GM12878 (cell line): ENCODE measurements at regions of chr3 and their contacts with region 1.

Region 1: DNA sequence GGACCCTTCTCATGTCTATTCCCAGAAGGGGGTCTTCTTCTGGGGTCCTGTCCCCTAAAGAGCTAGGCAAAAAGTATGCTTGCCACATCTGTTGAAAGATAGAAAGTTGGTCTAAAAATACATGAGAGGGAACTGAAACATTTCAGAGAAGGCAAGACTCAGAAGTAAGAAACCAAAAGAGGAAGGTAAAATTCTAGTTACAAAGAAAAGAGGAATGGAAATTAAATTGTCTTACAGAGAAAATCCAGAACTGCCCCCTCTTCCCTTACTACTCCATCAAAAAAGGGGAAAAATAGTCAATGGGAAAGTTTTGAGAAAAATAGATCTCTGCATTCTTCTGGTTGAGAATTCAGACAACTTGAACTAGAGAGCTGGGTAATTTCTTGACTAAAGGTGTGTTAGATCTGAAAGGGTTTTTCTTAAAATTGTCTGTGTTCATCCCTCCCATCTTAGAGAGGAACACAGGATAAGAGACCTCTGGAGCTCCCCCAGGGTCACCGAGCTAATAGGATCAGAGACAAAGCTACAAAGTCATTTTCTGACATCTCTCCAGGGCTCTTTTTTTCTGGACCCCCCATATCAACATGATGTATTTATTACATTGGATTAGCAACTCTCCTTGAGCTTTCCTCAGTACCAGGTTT is 32.3 kb upstream of the CCR2 start:
- DNase-seq: no peak
- ATAC-seq: peak; percentile 85
- H3K4me3 ChIP-seq: peak overlapping the region; percentile 64; the same call in 1 of the 2 replicates
- H3K27ac ChIP-seq: peak overlapping the region; percentile 59
- H3K4me1 ChIP-seq: peaks cover 17% of the 10 kb centered on the region
- H3K27me3 ChIP-seq: no peaks in the 10 kb centered on the region
- CTCF ChIP-seq: no peak
- EP300 ChIP-seq: peak in 1 of 2 experiments; percentile 69; a peak in 2 of 4 replicates
- POLR2A ChIP-seq: no peak
- RAD21 ChIP-seq: no peak

Region 2: GRCh38 chr3:46297658-46298463 is 23.7 kb before region 1 on chr3:
- CTCF ChIA-PET with region 1: no interaction called
- POLR2A ChIA-PET with region 1: no interaction called
- RAD21 ChIA-PET with region 1: interaction called, 15 read pairs
- SMC1A ChIA-PET with region 1: interaction called, 22 read pairs
- in situ Hi-C with region 1: no loop called
- intact Hi-C with region 1: no loop called
- DNase-seq: no peak
- ATAC-seq: peak; percentile 20
- H3K4me3 ChIP-seq: no peak overlapping the region
- H3K27ac ChIP-seq: peak overlapping the region; percentile 47; the same call in 1 of the 2 replicates
- H3K4me1 ChIP-seq: peaks cover 68% of the 10 kb centered on the region
- H3K27me3 ChIP-seq: no peaks in the 10 kb centered on the region
- CTCF ChIP-seq: no peak
- EP300 ChIP-seq: no peak
- POLR2A ChIP-seq: no peak
- RAD21 ChIP-seq: no peak

Region 3: GRCh38 chr3:46334741-46335478 is 13.3 kb after region 1 on chr3:
- CTCF ChIA-PET with region 1: interaction called, 11 read pairs
- POLR2A ChIA-PET with region 1: interaction called, 4 read pairs
- RAD21 ChIA-PET with region 1: no interaction called
- SMC1A ChIA-PET with region 1: interaction called, 4 read pairs
- in situ Hi-C with region 1: no loop called
- intact Hi-C with region 1: no loop called
- DNase-seq: no peak
- ATAC-seq: no peak
- H3K4me3 ChIP-seq: no peak overlapping the region
- H3K27ac ChIP-seq: no peak overlapping the region
- H3K4me1 ChIP-seq: no peaks in the 10 kb centered on the region
- H3K27me3 ChIP-seq: no peaks in the 10 kb centered on the region
- CTCF ChIP-seq: no peak
- EP300 ChIP-seq: no peak
- POLR2A ChIP-seq: no peak
- RAD21 ChIP-seq: no peak

Region 4: GRCh38 chr3:46349485-46350261 is 28.1 kb after region 1 on chr3:
- CTCF ChIA-PET with region 1: interaction called, 3 read pairs
- POLR2A ChIA-PET with region 1: interaction called, 3 read pairs
- RAD21 ChIA-PET with region 1: no interaction called
- SMC1A ChIA-PET with region 1: interaction called, 9 read pairs
- in situ Hi-C with region 1: no loop called
- intact Hi-C with region 1: loop called (anchors 5 kb)
- DNase-seq: no peak
- ATAC-seq: peak; percentile 92
- H3K4me3 ChIP-seq: peak overlapping the region; percentile 42
- H3K27ac ChIP-seq: peak overlapping the region; percentile 59
- H3K4me1 ChIP-seq: peaks cover 31% of the 10 kb centered on the region
- H3K27me3 ChIP-seq: no peaks in the 10 kb centered on the region; a peak in 1 of 4 replicates
- CTCF ChIP-seq: no peak
- EP300 ChIP-seq: no peak
- POLR2A ChIP-seq: no peak
- RAD21 ChIP-seq: no peak

Region 5: DNA sequence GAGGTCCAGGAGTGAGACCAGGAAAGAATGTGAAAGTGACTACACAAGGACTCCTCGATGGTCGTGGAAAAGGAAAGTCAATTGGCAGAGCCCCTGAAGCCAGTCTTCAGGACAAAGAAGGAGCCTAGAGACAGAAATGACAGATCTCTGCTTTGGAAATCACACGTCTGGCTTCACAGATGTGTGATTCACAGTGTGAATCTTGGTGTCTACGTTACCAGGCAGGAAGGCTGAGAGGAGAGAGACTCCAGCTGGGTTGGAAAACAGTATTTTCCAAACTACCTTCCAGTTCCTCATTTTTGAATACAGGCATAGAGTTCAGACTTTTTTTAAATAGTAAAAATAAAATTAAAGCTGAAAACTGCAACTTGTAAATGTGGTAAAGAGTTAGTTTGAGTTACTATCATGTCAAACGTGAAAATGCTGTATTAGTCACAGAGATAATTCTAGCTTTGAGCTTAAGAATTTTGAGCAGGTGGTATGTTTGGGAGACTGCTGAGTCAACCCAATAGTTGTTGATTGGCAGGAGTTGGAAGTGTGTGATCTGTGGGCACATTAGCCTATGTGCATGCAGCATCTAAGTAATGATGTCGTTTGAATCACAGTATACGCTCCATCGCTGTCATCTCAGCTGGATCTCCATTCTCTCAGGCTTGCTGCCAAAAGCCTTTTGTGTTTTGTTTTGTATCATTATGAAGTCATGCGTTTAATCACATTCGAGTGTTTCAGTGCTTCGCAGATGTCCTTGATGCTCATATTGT is 38.3 kb after region 1 on chr3:
- CTCF ChIA-PET with region 1: interaction called, 3 read pairs
- POLR2A ChIA-PET with region 1: interaction called, 7 read pairs
- RAD21 ChIA-PET with region 1: interaction called, 3 read pairs
- SMC1A ChIA-PET with region 1: interaction called, 15 read pairs
- in situ Hi-C with region 1: no loop called
- intact Hi-C with region 1: no loop called
- DNase-seq: peak; percentile 68
- ATAC-seq: peak; percentile 91
- H3K4me3 ChIP-seq: no peak overlapping the region
- H3K27ac ChIP-seq: peak overlapping the region; percentile 45
- H3K4me1 ChIP-seq: peaks cover 40% of the 10 kb centered on the region
- H3K27me3 ChIP-seq: no peaks in the 10 kb centered on the region
- CTCF ChIP-seq: no peak
- EP300 ChIP-seq: peak; percentile 25 to 42; a peak in 1 of 4 replicates
- POLR2A ChIP-seq: no peak
- RAD21 ChIP-seq: no peak

Region 6: GRCh38 chr3:46386206-46386605 is 64.6 kb after region 1 on chr3:
- CTCF ChIA-PET with region 1: no interaction called
- POLR2A ChIA-PET with region 1: no interaction called
- RAD21 ChIA-PET with region 1: no interaction called
- SMC1A ChIA-PET with region 1: no interaction called
- in situ Hi-C with region 1: no loop called
- intact Hi-C with region 1: no loop called
- DNase-seq: no peak
- ATAC-seq: peak; percentile 30; the same call in 2 of the 3 replicates
- H3K4me3 ChIP-seq: no peak overlapping the region
- H3K27ac ChIP-seq: no peak overlapping the region
- H3K4me1 ChIP-seq: peaks cover 14% of the 10 kb centered on the region
- H3K27me3 ChIP-seq: no peaks in the 10 kb centered on the region
- CTCF ChIP-seq: no peak
- EP300 ChIP-seq: no peak
- POLR2A ChIP-seq: no peak
- RAD21 ChIP-seq: no peak